SK-N-SH (cell line): ENCODE measurements at regions of chr5 and their contacts with region 1.

Region 1: GRCh38 chr5:160390787-160391696 is 8.8 kb downstream of the FAM200C start:
- DNase-seq: no peak
- H3K4me3 ChIP-seq: no peak overlapping the region
- H3K27ac ChIP-seq: no peak overlapping the region
- H3K4me1 ChIP-seq: peaks cover 0 to 3% of the 10 kb centered on the region in 2 experiments; a peak in 2 of 4 replicates
- H3K27me3 ChIP-seq: no peaks in the 10 kb centered on the region
- CTCF ChIP-seq: peak; percentile 76
- EP300 ChIP-seq: no peak
- RAD21 ChIP-seq: peak; percentile 77

Region 2: GRCh38 chr5:160199410-160199911 is 191.6 kb before region 1 on chr5:
- CTCF ChIA-PET with region 1: interaction called, 31 read pairs
- POLR2A ChIA-PET with region 1: no interaction called
- DNase-seq: peak; percentile 97
- H3K4me3 ChIP-seq: peak overlapping the region; percentile 10 to 49; a peak in 3 of 4 replicates
- H3K27ac ChIP-seq: no peak overlapping the region; a peak in 1 of 4 replicates
- H3K4me1 ChIP-seq: peaks cover 0 to 17% of the 10 kb centered on the region in 2 experiments; a peak in 2 of 4 replicates
- H3K27me3 ChIP-seq: no peaks in the 10 kb centered on the region
- CTCF ChIP-seq: peak; percentile 97
- EP300 ChIP-seq: no peak
- RAD21 ChIP-seq: peak; percentile 81

Region 3: GRCh38 chr5:160245506-160246086 is 145.4 kb before region 1 on chr5:
- CTCF ChIA-PET with region 1: interaction called, 17 read pairs
- POLR2A ChIA-PET with region 1: no interaction called
- DNase-seq: peak; percentile 62
- H3K4me3 ChIP-seq: no peak overlapping the region
- H3K27ac ChIP-seq: peak overlapping the region in 1 of 2 experiments; percentile 73; a peak in 2 of 4 replicates
- H3K4me1 ChIP-seq: peaks cover 0 to 19% of the 10 kb centered on the region in 2 experiments; a peak in 1 of 4 replicates
- H3K27me3 ChIP-seq: no peaks in the 10 kb centered on the region
- CTCF ChIP-seq: no peak
- EP300 ChIP-seq: no peak
- RAD21 ChIP-seq: 0 out of 2 replicates have a peak, but pooled peaks have one; percentile 6

Region 4: DNA sequence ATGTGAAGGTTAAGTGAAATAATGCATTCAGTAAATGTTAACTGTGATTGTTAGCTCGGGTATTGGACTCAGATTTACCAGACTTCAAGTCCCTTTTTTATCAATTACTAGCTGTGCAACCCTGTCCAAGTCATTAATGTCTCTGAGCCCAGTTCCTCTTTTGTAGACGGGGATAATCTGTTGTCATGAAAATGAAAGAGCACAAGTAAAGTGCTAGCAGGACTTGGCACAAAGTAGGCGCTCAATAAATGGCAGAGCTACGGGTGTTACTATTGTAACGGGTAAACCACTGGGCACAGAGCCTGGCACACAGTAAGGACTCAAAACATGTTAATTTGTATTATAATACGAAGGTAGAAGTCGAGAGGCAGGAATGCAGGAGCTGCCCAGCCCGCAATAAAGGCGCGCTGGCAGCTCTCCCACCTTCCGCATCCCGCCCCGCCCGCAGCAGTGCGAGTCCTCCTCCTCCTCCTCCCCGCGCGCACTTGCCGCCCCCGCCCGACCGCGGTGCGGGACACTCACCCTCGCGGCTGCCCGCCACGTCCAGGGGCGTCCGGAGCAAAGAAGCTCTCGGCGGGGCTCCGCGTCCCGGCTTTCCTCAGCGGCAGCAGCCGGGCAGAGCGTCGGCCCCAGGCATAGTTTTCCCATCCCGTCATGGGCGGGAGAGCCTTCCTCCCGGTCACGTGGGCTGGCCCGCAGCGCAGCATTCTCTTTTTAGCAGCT is 20.9 kb before region 1 on chr5 and contains the start of gene C1QTNF2:
- CTCF ChIA-PET with region 1: interaction called, 67 read pairs
- POLR2A ChIA-PET with region 1: no interaction called
- DNase-seq: peak; percentile 77
- H3K4me3 ChIP-seq: peak within 1 kb of the TSS; percentile 59 to 63
- H3K27ac ChIP-seq: no peak within 1 kb of the TSS
- H3K4me1 ChIP-seq: peaks cover 0 to 10% of the 10 kb centered on the region in 2 experiments; a peak in 1 of 4 replicates
- H3K27me3 ChIP-seq: no peaks in the 10 kb centered on the region; the same call in 1 of the 2 replicates
- CTCF ChIP-seq: no peak
- EP300 ChIP-seq: no peak
- RAD21 ChIP-seq: no peak
- polyA plus RNA-seq, gene C1QTNF2: 0.65 and 0.67 TPM in 2 replicates

Region 5: GRCh38 chr5:160379511-160379910 is 11.5 kb before region 1 on chr5:
- CTCF ChIA-PET with region 1: interaction called, 67 read pairs
- POLR2A ChIA-PET with region 1: interaction called, 3 read pairs
- DNase-seq: no peak
- H3K4me3 ChIP-seq: no peak overlapping the region
- H3K27ac ChIP-seq: no peak overlapping the region
- H3K4me1 ChIP-seq: no peaks in the 10 kb centered on the region
- H3K27me3 ChIP-seq: no peaks in the 10 kb centered on the region; the same call in 1 of the 2 replicates
- CTCF ChIP-seq: no peak
- EP300 ChIP-seq: no peak
- RAD21 ChIP-seq: no peak

Region 6: GRCh38 chr5:160445132-160445531 is 54.1 kb after region 1 on chr5:
- CTCF ChIA-PET with region 1: no interaction called
- POLR2A ChIA-PET with region 1: no interaction called
- DNase-seq: no peak
- H3K4me3 ChIP-seq: no peak overlapping the region
- H3K27ac ChIP-seq: no peak overlapping the region
- H3K4me1 ChIP-seq: no peaks in the 10 kb centered on the region
- H3K27me3 ChIP-seq: no peaks in the 10 kb centered on the region
- CTCF ChIP-seq: no peak
- EP300 ChIP-seq: no peak
- RAD21 ChIP-seq: no peak

Region 7: DNA sequence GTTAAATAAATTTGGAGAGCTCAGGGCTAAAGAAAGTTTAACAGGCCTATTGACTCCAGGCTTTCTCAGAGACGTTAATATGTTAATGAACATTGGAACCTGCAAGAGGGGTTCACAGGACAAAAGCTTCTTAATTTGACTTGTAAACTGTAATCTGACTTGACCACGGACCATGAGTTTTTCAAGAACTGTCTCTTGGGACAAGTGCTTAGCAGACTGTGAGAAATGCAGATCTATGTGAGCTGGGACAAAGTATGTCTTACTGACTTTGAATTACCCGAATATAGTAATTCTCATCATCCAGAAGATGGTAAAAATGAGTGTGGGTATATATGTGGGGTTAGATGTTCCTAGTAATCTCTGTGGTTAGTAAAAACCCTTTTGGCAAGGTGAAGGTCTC is 274.4 kb after region 1 on chr5:
- CTCF ChIA-PET with region 1: no interaction called
- POLR2A ChIA-PET with region 1: no interaction called
- DNase-seq: no peak
- H3K4me3 ChIP-seq: no peak overlapping the region
- H3K27ac ChIP-seq: no peak overlapping the region
- H3K4me1 ChIP-seq: no peaks in the 10 kb centered on the region
- H3K27me3 ChIP-seq: no peaks in the 10 kb centered on the region
- CTCF ChIP-seq: no peak
- EP300 ChIP-seq: no peak
- RAD21 ChIP-seq: no peak